Naive thymus-derived CD4-positive, alpha-beta T cell (primary cell): ENCODE measurements at regions of chr12 and their contacts with region 1.

Region 1: GRCh38 chr12:120327593-120327992 is at the start of gene PLA2G1B:
- DNase-seq: no peak
- ATAC-seq: no peak
- H3K4me3 ChIP-seq: no peak within 1 kb of the TSS
- H3K4me3 Mint-ChIP-seq: peak within 1 kb of the TSS in 1 of 10 donors; percentile 25
- H3K27ac ChIP-seq: no peak within 1 kb of the TSS
- H3K27ac Mint-ChIP-seq: no peak within 1 kb of the TSS
- H3K4me1 ChIP-seq: no peaks in the 10 kb centered on the region
- H3K4me1 Mint-ChIP-seq: peaks cover 0 to 10% (median 2%) of the 10 kb centered on the region in 7 donors
- H3K27me3 ChIP-seq: no peaks in the 10 kb centered on the region
- H3K27me3 Mint-ChIP-seq: peaks cover 0 to 18% (median 0%) of the 10 kb centered on the region in 5 donors
- total RNA-seq, gene PLA2G1B: 1.5 TPM in 1 of 5 experiments, not detected in the others

Region 2: DNA sequence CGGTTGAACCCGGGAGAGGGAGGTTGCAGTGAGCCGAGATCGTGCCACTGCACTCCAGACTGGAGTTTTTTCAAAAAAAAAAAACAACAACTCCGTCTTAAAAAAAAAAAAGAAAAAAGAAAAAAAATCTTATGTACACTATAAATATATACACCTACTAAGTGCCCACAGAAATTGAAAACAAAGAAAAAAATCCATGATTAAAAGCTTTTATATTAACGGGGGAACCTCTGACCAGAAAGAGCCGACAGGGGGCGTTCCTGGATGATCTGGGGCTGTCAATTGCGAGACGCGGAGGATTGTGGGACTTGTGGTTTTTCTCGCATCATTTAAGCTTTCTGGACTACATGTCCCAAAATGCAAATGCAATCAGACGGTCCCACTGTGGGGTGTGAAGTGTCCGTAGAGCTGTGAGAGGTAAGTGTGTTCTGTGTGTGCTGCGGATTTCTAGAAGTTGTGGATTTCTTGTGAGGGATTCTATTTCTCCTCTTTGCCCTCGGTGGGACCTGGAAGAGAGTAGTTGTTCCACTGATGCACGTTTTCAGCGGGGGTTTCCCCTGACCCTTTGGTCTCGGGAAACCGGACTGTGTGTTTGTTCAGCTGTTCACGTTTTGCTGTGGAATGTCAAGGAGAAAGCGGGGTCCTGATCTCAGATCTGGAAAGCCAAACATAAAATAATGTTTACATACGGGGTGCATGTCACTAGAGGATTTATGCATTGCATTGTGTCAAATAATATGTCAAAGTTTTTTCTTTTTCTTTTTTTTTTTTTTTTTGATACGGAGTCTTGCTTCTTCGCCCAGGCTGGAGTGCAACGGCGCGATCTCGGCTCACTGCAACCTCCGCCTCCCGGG is 25.4 kb before region 1 on chr12 and contains the start of gene SIRT4:
- CTCF ChIA-PET with region 1: interaction called, 5 read pairs
- POLR2A ChIA-PET with region 1: interaction called, 5 read pairs
- intact Hi-C with region 1: loop called in 1 of 2 experiments (anchors 2 kb)
- DNase-seq: peak; percentile 65 to 90 (median 87)
- ATAC-seq: peak; percentile 100
- H3K4me3 ChIP-seq: peak within 1 kb of the TSS; percentile 98
- H3K4me3 Mint-ChIP-seq: peak within 1 kb of the TSS; percentile 87 to 100 (median 96)
- H3K27ac ChIP-seq: peak within 1 kb of the TSS; percentile 72
- H3K27ac Mint-ChIP-seq: peak within 1 kb of the TSS; percentile 69 to 96 (median 87)
- H3K4me1 ChIP-seq: peaks cover 0 to 4% of the 10 kb centered on the region in 2 donors
- H3K4me1 Mint-ChIP-seq: peaks cover 0 to 16% (median 10%) of the 10 kb centered on the region in 7 donors
- H3K27me3 ChIP-seq: no peaks in the 10 kb centered on the region
- H3K27me3 Mint-ChIP-seq: no peaks in the 10 kb centered on the region
- total RNA-seq, gene SIRT4: 1.6 to 6.0 (median 4.0) TPM

Region 3: GRCh38 chr12:120356567-120357030 is 29.0 kb after region 1 on chr12:
- CTCF ChIA-PET with region 1: interaction called, 3 read pairs
- POLR2A ChIA-PET with region 1: no interaction called
- intact Hi-C with region 1: loop called in 1 of 2 experiments (anchors 1 kb)
- DNase-seq: peak; percentile 47 to 78 (median 61)
- ATAC-seq: peak; percentile 88
- H3K4me3 ChIP-seq: no peak overlapping the region
- H3K4me3 Mint-ChIP-seq: no peak overlapping the region
- H3K27ac ChIP-seq: no peak overlapping the region
- H3K27ac Mint-ChIP-seq: no peak overlapping the region
- H3K4me1 ChIP-seq: no peaks in the 10 kb centered on the region
- H3K4me1 Mint-ChIP-seq: peaks cover 0 to 3% (median 0%) of the 10 kb centered on the region in 7 donors
- H3K27me3 ChIP-seq: no peaks in the 10 kb centered on the region
- H3K27me3 Mint-ChIP-seq: peaks cover 30 to 36% (median 31%) of the 10 kb centered on the region in 5 donors

Region 4: GRCh38 chr12:120469450-120470149 is 142.0 kb after region 1 on chr12 and contains the start of gene SRSF9:
- CTCF ChIA-PET with region 1: no interaction called
- POLR2A ChIA-PET with region 1: interaction called, 3 read pairs
- intact Hi-C with region 1: loop called in 1 of 2 experiments (anchors 1 kb)
- DNase-seq: peak; percentile 96 to 100 (median 97)
- ATAC-seq: peak; percentile 95
- H3K4me3 ChIP-seq: peak within 1 kb of the TSS; percentile 78
- H3K4me3 Mint-ChIP-seq: peak within 1 kb of the TSS; percentile 75 to 99 (median 90)
- H3K27ac ChIP-seq: peak within 1 kb of the TSS; percentile 86
- H3K27ac Mint-ChIP-seq: peak within 1 kb of the TSS; percentile 71 to 96 (median 86)
- H3K4me1 ChIP-seq: peaks cover 4 to 31% of the 10 kb centered on the region in 2 donors
- H3K4me1 Mint-ChIP-seq: peaks cover 34 to 65% (median 47%) of the 10 kb centered on the region in 7 donors
- H3K27me3 ChIP-seq: no peaks in the 10 kb centered on the region
- H3K27me3 Mint-ChIP-seq: peaks cover 0 to 2% (median 0%) of the 10 kb centered on the region in 5 donors
- total RNA-seq, gene SRSF9: 136 to 191 (median 145) TPM

Region 5: DNA sequence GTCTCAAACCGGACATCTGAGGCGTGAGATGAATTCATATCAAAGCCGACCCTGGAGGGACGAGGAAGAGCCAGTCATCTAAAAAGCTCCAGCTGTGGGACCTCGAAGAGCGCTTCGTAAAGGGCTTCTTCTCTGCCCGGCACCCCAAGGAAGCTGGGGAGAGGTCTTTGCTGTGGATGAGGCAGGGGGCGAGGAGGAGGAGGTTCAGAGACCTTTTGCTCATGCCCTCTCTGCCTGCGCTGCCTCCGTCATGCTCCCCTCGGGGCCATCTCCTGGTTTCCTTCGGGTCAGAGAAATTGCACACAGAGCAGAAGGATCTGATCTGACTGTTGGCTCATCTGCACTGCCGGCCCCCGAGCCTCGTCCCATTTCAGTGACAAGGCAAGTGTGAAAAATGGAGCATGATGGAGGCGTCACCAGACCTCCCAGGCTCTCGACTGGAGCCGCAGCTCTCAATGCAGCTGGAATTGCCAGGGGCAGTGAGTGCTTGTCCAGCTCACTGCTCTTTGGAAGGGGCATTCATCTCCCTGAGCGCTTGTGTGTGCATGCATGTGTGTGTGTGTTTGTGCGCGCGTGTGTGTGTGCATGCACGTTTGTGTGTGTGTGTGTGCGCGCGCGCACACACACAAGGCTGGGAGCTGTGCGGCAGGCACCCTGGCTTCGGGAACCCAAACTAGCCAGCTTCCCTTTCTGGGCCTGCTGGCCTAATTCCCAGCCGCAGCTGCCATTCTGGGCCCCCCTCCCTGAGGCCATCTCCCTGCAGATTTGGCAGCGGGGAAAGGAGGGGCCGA is 322.0 kb after region 1 on chr12:
- CTCF ChIA-PET with region 1: no interaction called
- POLR2A ChIA-PET with region 1: no interaction called
- intact Hi-C with region 1: loop called in 1 of 2 experiments (anchors 1 kb)
- DNase-seq: no peak
- ATAC-seq: no peak
- H3K4me3 ChIP-seq: no peak overlapping the region
- H3K4me3 Mint-ChIP-seq: peak overlapping the region in 8 of 10 donors; percentile 31 to 78 (median 49)
- H3K27ac ChIP-seq: no peak overlapping the region
- H3K27ac Mint-ChIP-seq: no peak overlapping the region
- H3K4me1 ChIP-seq: peaks cover 6 to 7% of the 10 kb centered on the region in 2 donors
- H3K4me1 Mint-ChIP-seq: peaks cover 6 to 16% (median 13%) of the 10 kb centered on the region in 7 donors
- H3K27me3 ChIP-seq: peaks cover 3 to 5% of the 10 kb centered on the region in 2 donors
- H3K27me3 Mint-ChIP-seq: peaks cover 42 to 63% (median 58%) of the 10 kb centered on the region in 5 donors

Region 6: GRCh38 chr12:120971299-120972179 is 643.9 kb after region 1 on chr12:
- CTCF ChIA-PET with region 1: no interaction called
- POLR2A ChIA-PET with region 1: no interaction called
- intact Hi-C with region 1: loop called in 1 of 2 experiments (anchors 5 kb)
- DNase-seq: peak in 8 of 9 donors; percentile 25 to 75 (median 63)
- ATAC-seq: peak; percentile 95
- H3K4me3 ChIP-seq: no peak overlapping the region
- H3K4me3 Mint-ChIP-seq: no peak overlapping the region
- H3K27ac ChIP-seq: no peak overlapping the region
- H3K27ac Mint-ChIP-seq: peak overlapping the region in 1 of 9 donors; percentile 77
- H3K4me1 ChIP-seq: no peaks in the 10 kb centered on the region
- H3K4me1 Mint-ChIP-seq: peaks cover 0 to 8% (median 7%) of the 10 kb centered on the region in 7 donors
- H3K27me3 ChIP-seq: no peaks in the 10 kb centered on the region
- H3K27me3 Mint-ChIP-seq: peaks cover 0 to 3% (median 0%) of the 10 kb centered on the region in 5 donors